ENCODE measurements at regions of chr17 and their contacts with region 1.

Region 1: DNA sequence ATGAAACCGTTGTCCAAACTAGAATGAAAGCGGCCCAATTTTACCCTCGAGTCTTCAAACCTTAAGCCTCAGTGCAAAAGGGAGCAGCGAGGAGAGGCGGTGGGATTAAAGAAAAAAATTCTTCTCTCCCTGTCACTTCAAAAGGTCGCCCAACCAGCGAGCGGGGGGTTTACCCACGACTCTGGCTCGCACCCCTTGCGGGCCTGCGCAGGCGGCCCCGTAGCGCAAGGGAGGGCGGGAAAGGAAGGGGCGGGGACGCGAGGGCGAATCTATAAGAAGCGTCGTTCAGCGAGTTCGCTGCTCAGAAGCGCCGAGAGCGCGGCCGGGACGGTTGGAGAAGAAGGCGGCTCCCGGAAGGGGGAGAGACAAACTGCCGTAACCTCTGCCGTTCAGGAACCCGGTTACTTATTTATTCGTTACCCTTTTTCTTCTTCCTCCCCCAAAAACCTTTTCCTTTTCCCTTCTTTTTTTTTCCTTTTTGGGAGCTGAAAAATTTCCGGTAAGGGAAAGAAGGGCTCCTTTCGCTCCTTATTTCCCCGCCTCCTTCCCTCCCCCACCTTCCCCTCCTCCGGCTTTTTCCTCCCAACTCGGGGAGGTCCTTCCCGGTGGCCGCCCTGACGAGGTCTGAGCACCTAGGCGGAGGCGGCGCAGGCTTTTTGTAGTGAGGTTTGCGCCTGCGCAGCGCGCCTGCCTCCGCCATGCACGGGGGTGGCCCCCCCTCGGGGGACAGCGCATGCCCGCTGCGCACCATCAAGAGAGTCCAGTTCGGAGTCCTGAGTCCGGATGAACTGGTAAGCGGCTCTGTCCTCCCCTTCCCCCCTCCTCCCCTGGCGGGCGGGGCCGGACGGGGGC is at the start of gene POLR2A:
- DNase-seq: peak; percentile 97
- H3K4me3 Mint-ChIP-seq: peak within 1 kb of the TSS; percentile 87
- H3K27ac Mint-ChIP-seq: peak within 1 kb of the TSS; percentile 98
- H3K4me1 Mint-ChIP-seq: peaks cover 66% of the 10 kb centered on the region
- H3K27me3 Mint-ChIP-seq: no peaks in the 10 kb centered on the region
- total RNA-seq, gene POLR2A: 169 to 172 TPM

Region 2: DNA sequence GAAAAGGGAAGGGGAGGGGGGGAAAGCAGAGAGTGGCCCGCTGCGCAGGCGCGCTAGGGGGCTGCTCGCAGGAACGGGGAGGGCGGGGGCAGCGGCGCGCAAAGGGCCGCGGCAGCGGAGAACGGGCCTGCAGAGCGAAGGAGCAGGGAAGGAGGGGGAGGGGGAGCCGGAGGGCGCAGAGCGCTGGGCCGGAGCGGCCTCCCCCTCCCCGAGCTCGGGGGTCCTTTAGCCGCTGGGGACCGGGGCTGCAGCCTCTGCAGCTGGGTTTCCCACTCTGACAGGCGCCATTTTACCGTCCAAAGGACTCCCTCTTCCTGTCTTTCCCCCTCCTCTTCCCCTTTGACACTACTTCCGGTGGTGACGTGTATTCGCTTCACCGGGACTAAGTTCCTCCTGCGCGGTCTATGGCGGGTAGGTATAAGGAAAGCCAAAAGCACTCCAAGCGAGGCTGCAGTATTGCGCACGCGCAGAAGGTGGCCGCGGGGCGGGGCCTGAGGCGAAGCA is 232.6 kb before region 1 on chr17 and contains the start of gene CTDNEP1:
- CTCF ChIA-PET with region 1: no interaction called
- POLR2A ChIA-PET with region 1: no interaction called
- DNase-seq: peak; percentile 99
- H3K4me3 Mint-ChIP-seq: peak within 1 kb of the TSS; percentile 91
- H3K27ac Mint-ChIP-seq: peak within 1 kb of the TSS; percentile 97
- H3K4me1 Mint-ChIP-seq: peaks cover 48% of the 10 kb centered on the region
- H3K27me3 Mint-ChIP-seq: no peaks in the 10 kb centered on the region
- total RNA-seq, gene CTDNEP1: 170 to 175 TPM

Region 3: GRCh38 chr17:7296189-7296902 is 187.9 kb before region 1 on chr17:
- CTCF ChIA-PET with region 1: no interaction called
- POLR2A ChIA-PET with region 1: no interaction called
- DNase-seq: peak; percentile 71
- H3K4me3 Mint-ChIP-seq: no peak overlapping the region
- H3K27ac Mint-ChIP-seq: no peak overlapping the region
- H3K4me1 Mint-ChIP-seq: peaks cover 29% of the 10 kb centered on the region
- H3K27me3 Mint-ChIP-seq: peaks cover 40% of the 10 kb centered on the region

Region 4: DNA sequence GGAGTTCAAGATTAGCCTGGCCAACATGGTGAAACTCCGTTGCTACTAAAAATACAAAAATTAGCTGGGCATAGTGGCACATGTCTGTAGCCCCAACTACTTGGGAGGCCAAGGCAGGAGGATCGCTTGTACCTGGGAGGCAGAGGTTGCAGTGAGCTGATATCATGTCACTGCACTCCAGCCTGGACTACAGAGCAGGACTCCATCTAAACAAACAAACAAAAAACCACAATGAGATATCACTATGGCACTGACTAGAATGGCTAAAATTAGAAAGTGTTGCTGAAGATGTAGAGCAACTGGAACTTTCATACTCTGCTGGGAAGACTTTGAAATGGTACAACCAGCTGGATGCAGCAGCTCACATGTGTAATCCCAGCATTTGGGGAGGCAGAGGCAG is 109.9 kb before region 1 on chr17:
- CTCF ChIA-PET with region 1: no interaction called
- POLR2A ChIA-PET with region 1: no interaction called
- DNase-seq: no peak
- H3K4me3 Mint-ChIP-seq: no peak overlapping the region
- H3K27ac Mint-ChIP-seq: no peak overlapping the region
- H3K4me1 Mint-ChIP-seq: no peaks in the 10 kb centered on the region
- H3K27me3 Mint-ChIP-seq: peaks cover 22% of the 10 kb centered on the region

Region 5: DNA sequence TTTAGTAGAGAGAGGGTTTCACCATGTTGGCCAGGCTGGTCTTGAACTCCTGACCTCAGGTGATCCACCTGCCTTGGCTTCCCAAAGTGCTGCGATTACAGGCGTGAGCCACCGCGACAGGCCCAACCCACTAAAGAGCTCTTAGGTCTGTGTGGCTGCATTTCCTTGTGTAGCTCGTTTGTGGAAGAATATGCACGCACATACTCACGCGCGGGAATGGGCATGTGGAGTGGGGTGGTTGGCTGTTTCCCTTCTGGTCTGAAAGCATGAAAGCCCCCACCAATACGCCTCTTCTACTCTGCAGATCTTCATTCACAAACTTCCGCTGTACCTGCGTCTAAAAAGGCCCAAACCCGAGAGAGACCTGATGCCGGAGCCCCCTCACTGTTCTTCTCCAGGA is 29.3 kb before region 1 on chr17:
- CTCF ChIA-PET with region 1: interaction called, 5 read pairs
- POLR2A ChIA-PET with region 1: interaction called, 81 read pairs
- DNase-seq: no peak
- H3K4me3 Mint-ChIP-seq: peak overlapping the region; percentile 91
- H3K27ac Mint-ChIP-seq: peak overlapping the region; percentile 92
- H3K4me1 Mint-ChIP-seq: peaks cover 30% of the 10 kb centered on the region
- H3K27me3 Mint-ChIP-seq: no peaks in the 10 kb centered on the region

Region 6: DNA sequence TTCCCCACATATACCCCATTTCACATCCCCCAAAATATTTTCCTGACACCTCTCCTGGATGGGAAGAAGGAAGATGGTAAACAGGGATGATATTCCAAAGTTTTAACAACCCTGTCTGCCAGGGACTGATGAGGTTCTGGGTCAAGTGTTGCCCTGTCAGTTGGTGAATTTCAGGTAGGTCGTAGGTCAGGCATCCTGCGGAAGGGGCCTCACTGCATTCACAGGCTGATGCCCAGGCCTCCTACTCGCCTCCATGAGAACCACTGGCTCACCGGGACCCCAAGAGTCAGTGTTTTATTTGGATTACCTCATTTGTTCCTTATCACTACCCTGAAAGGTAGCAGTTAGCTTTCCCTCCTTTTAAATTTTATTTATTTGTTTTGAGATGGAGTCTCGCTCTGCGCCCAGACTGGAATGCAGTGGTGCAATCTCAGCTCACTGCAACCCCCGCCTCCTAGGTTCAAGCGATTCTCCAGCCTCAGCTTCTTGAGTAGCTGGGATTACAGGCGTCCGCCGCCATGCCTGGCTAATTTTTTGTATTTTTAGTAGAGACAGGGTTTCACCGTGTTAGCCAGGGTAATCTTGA is 15.4 kb before region 1 on chr17:
- CTCF ChIA-PET with region 1: no interaction called
- POLR2A ChIA-PET with region 1: interaction called, 13 read pairs
- DNase-seq: no peak
- H3K4me3 Mint-ChIP-seq: no peak overlapping the region
- H3K27ac Mint-ChIP-seq: no peak overlapping the region
- H3K4me1 Mint-ChIP-seq: peaks cover 11% of the 10 kb centered on the region
- H3K27me3 Mint-ChIP-seq: no peaks in the 10 kb centered on the region

Region 7: GRCh38 chr17:7548585-7549400 is 64.5 kb after region 1 on chr17 and contains the start of gene TNFSF12:
- CTCF ChIA-PET with region 1: interaction called, 3 read pairs
- POLR2A ChIA-PET with region 1: interaction called, 24 read pairs
- DNase-seq: peak; percentile 73
- H3K4me3 Mint-ChIP-seq: peak within 1 kb of the TSS; percentile 99
- H3K27ac Mint-ChIP-seq: peak within 1 kb of the TSS; percentile 93
- H3K4me1 Mint-ChIP-seq: peaks cover 58% of the 10 kb centered on the region
- H3K27me3 Mint-ChIP-seq: no peaks in the 10 kb centered on the region
- total RNA-seq, gene TNFSF12: 79.8 to 86.7 TPM

Region 8: DNA sequence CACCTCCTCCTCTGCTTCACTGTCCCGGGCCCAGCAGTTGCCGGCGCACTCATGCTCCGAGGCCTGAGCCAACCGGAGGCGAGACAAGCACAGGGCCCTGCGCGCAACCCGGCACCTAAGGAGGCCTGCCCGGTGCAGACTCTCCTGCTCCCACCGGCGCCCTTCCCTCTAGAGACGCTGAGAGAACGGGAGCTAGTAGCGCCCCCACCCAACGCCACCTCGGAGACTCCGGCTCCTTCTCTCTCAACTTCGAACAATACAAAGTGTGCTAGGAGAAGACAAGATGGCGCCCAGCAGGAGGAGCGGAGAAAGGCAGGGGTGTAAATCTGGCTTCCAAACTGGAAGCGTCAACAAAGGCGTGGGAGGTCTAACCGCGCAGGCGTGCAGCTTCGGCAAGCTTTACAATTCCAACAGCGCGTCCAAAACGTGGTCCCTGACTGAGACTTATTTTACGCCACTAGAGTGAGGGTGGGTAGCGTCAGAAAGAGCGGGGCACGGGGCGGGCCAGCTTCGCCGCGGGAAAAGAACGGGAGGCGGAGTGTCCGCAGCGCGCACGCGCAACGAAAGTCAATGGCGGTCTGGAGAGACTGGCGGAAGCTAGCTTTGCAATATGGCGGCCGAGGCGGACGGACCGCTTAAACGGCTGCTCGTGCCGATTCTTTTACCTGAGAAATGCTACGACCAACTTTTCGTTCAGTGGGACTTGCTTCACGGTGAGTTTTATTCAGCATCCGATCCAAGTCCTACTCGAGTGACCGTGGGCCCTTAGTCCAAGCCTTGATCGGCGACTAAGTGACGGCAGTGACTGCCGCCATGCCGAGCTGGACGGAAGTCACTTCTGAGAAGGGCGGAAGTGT is 99.2 kb after region 1 on chr17 and contains the start of gene MPDU1:
- CTCF ChIA-PET with region 1: interaction called, 4 read pairs
- POLR2A ChIA-PET with region 1: interaction called, 24 read pairs
- DNase-seq: peak; percentile 96
- H3K4me3 Mint-ChIP-seq: peak within 1 kb of the TSS; percentile 97
- H3K27ac Mint-ChIP-seq: peak within 1 kb of the TSS; percentile 99
- H3K4me1 Mint-ChIP-seq: peaks cover 68% of the 10 kb centered on the region
- H3K27me3 Mint-ChIP-seq: no peaks in the 10 kb centered on the region
- total RNA-seq, gene MPDU1: 54.1 to 58.6 TPM

Measured in activated CD4-positive, alpha-beta memory T cell treated with anti-CD3 and anti-CD28 coated beads, Interleukin-2, amount 10 ng/mL, durations not matched to agents 7 days and 5 days (primary cell).